ENCODE measurements at regions of chr1 and their contacts with region 1.

Region 1: DNA sequence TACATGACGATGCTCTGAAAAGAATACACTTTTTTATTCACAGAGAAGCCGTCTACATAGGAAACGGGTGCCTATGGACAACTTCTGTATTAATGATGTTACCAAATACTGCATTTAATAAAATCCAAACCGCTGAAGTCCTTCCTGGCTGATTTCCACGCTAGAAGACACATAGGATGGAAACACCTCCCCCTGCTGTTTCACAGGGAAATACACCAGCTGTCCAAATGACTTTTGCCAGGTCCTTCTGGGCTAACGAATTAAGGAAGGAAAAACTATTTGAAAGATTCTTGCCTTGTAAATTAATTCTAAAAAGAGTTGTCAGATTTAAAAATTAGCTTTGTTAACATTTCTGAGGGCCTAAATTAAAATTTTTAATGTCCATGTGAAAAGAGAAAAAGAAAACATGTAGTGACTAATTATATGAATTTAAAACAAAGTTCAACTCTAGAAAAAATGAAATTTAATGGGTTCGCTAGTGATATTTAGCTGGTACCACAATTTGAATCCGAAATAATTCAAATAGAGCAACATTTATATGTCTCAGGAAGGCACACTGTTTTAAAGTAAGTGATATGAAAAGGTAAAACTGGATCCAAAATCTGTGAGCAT is 146.0 kb downstream of the RERE start:
- DNase-seq: peak in 1 of 10 donors; percentile 52

Region 2: GRCh38 chr1:8463144-8463927 is 208.1 kb before region 1 on chr1:
- intact Hi-C with region 1: loop called (anchors 10 kb)
- DNase-seq: no peak

Region 3: GRCh38 chr1:8540261-8540941 is 131.0 kb before region 1 on chr1:
- intact Hi-C with region 1: no loop called
- DNase-seq: no peak

Region 4: GRCh38 chr1:8560611-8561544 is 110.5 kb before region 1 on chr1:
- intact Hi-C with region 1: loop called (anchors 1 kb)
- DNase-seq: peak in 2 of 10 donors; percentile 19 to 34